OCI-LY7 (cell line): ENCODE measurements at regions of chr9 and their contacts with region 1.

Region 1: GRCh38 chr9:97598461-97599288 is 34.5 kb downstream of the TSTD2 start:
- DNase-seq: peak; percentile 84
- H3K4me3 ChIP-seq: no peak overlapping the region
- H3K27ac ChIP-seq: no peak overlapping the region
- H3K4me1 ChIP-seq: peaks cover 8% of the 10 kb centered on the region
- CTCF ChIP-seq: peak; percentile 92

Region 2: GRCh38 chr9:97386733-97387503 is 211.8 kb before region 1 on chr9:
- CTCF ChIA-PET with region 1: no interaction called
- POLR2A ChIA-PET with region 1: no interaction called
- intact Hi-C with region 1: loop called (anchors 1 kb)
- DNase-seq: peak; percentile 58
- H3K4me3 ChIP-seq: no peak overlapping the region
- H3K27ac ChIP-seq: no peak overlapping the region
- H3K4me1 ChIP-seq: no peaks in the 10 kb centered on the region
- CTCF ChIP-seq: peak; percentile 90

Region 3: DNA sequence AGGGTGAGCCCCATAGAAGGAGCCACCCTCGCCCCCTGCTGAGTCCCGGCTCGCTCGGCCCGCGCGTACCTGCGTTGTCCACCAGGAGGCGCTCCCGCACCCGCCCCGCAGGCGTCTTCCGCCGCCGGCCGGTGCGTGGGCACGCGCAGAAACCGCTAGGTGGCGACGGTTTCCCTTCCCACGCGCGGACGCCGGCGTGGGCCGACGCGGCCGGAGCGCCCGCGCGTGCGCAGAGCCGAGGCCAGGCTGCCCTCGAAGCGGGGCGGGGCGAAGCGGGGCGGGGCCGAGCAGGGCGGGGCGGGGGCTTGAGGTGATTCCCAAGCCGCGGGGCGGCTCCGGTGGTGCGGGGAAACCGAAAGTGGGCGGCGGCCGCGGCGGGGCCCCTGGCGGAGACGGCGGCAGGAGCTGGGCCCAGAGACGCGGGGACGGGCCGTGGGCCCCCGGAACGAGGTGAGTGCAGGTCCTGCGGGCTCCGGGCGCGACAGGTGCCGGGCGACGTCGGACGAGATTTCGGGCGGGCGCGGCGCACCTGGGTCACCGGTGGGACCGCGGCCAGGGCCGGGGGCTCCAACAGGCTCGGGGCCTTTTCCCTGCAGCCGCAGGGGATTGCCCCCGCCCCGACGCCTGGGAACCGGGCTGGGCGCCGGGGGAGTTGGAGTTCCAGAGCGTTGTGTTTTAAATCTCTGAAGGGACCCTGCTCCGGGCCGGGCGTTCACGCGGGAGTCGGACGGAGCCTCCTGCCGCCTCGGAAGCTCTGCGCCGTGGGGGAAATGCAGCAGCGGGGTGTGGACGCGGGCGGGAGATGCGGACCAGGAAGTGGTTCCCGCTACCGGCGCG is 186.7 kb before region 1 on chr9 and contains the start of gene TDRD7:
- CTCF ChIA-PET with region 1: no interaction called
- POLR2A ChIA-PET with region 1: no interaction called
- intact Hi-C with region 1: loop called (anchors 5 kb)
- DNase-seq: peak; percentile 88
- H3K4me3 ChIP-seq: peak within 1 kb of the TSS; percentile 91
- H3K27ac ChIP-seq: no peak within 1 kb of the TSS
- H3K4me1 ChIP-seq: peaks cover 20% of the 10 kb centered on the region
- CTCF ChIP-seq: peak; percentile 88
- total RNA-seq, gene TDRD7: 4.0 and 5.5 TPM in 2 replicates

Region 4: DNA sequence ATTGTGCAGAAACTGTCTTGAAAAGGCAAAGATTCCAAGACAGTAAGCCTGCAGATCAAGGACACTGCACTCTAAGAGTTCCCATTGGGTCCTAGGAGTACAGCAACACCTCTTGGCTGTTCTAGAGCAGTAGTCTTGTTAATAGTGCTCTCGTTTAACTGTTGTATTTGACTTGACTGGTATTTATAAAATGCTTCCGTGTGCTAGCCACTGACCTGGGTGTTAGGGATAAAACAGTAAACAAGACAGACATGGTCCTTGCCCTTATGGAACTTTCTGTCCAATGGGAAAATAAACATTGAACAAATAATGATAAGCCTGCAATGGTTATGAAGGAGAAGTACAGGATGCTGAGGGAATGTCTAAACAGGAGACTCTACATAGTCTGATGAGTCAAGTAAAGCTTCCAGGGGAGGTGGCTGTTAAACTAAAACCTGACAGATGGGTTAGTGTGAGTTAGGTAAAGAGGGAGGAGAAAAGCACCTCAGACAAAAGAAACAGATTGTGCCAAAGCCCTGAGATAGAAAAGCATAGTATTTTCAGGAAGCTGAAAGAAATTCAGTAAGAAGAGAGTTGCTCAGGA is 153.5 kb before region 1 on chr9:
- CTCF ChIA-PET with region 1: no interaction called
- POLR2A ChIA-PET with region 1: no interaction called
- intact Hi-C with region 1: no loop called
- DNase-seq: no peak
- H3K4me3 ChIP-seq: no peak overlapping the region
- H3K27ac ChIP-seq: no peak overlapping the region
- H3K4me1 ChIP-seq: no peaks in the 10 kb centered on the region
- CTCF ChIP-seq: no peak

Region 5: DNA sequence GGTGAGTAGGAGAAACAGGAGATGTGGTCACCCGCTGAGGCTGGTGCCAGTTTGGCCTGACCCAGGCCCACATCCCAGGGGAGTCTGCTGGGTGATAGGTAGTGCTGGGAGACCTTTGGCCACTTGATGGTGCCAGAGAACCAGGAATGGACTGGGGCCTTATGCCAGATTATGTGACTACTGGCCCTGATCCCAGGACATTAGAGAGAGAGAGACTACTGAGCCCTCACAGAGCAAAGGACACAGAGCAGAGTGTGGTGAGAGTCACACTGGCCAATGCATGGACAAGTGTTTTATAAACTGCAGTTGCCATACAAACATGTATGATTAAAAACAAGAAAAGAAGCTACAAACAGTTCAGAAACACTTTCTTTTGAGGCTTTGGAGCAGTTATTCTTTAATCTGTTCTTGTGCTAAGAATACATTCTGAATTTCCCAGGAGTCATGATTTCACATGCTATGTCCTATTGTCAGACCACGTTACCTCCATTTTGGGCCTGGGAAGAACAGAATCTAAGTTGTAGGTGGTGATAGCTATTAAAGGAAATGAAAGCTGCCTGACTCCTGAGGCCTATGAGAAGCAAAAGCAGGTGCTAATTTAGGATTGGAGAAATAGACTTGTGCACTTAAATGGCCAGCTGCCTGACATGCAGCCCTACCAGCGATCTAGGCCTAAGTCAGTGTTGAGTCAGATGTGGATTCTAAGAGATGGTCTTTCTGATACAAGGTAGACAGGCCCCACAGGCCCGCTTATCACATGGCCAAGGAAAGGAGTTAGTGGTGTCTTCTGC is 129.8 kb before region 1 on chr9:
- CTCF ChIA-PET with region 1: interaction called, 6 read pairs
- POLR2A ChIA-PET with region 1: no interaction called
- intact Hi-C with region 1: loop called (anchors 2 kb)
- DNase-seq: peak; percentile 50
- H3K4me3 ChIP-seq: no peak overlapping the region
- H3K27ac ChIP-seq: no peak overlapping the region
- H3K4me1 ChIP-seq: no peaks in the 10 kb centered on the region
- CTCF ChIP-seq: peak; percentile 79

Region 6: DNA sequence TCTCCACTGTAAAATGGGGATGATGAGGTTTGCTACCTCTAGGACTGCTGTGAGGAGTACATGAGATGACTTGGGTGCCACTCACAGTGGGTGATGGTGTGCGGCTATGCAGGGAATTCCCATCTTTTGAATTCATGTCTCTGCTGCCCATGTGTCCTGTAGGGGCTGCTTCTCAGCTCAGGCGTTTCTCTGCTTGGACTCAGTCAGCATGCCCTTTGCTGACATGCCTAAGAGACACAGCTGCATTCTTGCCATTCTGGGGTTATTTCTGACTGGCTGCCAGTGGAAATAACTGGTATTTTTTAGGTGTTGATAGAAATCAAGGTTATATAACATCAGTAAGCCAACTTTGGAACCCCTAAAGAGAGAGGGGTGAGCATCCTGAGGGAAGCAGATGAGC is 122.7 kb after region 1 on chr9:
- CTCF ChIA-PET with region 1: no interaction called
- POLR2A ChIA-PET with region 1: no interaction called
- intact Hi-C with region 1: no loop called
- DNase-seq: no peak
- H3K4me3 ChIP-seq: no peak overlapping the region
- H3K27ac ChIP-seq: no peak overlapping the region
- H3K4me1 ChIP-seq: no peaks in the 10 kb centered on the region
- CTCF ChIP-seq: no peak

Region 7: DNA sequence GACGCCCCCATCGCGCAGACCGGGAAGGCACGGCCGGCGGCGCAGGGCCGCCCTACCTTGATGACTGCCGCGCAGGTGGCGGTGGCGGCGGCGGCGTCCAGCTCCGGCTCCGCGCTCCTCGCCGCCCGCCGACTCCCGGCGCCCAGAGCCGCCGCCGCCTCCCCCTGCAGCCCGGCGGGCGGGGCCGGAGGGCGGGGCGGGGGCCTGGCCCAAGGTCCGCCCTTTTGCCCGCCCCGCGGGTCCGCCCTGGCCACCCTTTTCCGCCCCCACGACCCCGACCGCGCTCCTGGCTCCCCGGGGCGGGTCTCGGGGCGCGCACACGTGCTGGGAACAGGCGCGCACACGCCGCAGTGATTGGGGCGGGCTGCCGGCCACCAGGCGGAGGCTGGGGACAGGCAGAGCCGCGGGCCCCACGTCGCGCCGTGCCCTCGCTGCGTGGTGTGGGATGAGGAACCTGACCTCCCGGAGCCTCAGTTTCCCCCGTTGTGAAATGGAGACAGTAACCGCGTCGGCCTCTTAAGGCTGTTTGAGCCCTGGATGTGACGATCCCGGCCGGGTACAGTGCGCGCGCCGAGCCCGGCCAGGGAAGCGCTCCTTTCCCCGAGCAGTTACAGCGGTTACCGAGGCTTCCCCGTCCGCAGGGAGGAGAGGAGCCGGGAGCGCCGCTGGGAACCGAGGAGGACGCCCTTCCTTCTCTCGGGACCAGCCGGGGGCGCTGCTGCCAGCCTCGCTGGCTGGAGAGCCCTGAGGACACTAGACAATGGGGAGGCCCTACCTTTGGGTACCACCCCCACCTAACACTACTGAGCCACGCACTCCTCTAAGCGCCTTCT is 594.0 kb after region 1 on chr9 and contains the start of gene CORO2A:
- CTCF ChIA-PET with region 1: no interaction called
- POLR2A ChIA-PET with region 1: no interaction called
- intact Hi-C with region 1: no loop called
- DNase-seq: peak; percentile 69
- H3K4me3 ChIP-seq: peak within 1 kb of the TSS; percentile 74
- H3K27ac ChIP-seq: no peak within 1 kb of the TSS
- H3K4me1 ChIP-seq: peaks cover 16% of the 10 kb centered on the region
- CTCF ChIP-seq: peak; percentile 70
- total RNA-seq, gene CORO2A: 1.8 and 2.2 TPM in 2 replicates